Posterior vena cava (tissue), 2 donors: ENCODE measurements at regions of chr9 and their contacts with region 1.

Region 1: DNA sequence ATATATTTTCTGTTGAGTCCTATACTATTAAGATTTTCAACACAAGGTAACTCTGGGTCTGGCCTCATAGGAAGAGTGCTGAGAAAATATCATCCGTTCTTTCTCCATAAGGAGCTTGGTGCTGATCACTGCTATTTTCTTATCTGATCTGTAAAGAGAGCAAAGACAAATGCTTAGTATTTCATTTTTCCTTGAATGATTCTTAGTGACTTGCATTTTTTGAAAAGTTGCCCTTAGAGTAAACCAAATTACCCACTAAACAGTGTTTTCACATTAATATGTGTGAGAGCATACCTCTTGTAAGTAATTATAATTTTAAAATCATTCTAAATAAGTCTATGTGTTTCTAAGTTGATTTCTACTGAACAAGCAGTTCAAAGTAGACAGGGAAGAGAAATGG is 121.3 kb upstream of the CTSV start:
- DNase-seq: no peak

Region 2: DNA sequence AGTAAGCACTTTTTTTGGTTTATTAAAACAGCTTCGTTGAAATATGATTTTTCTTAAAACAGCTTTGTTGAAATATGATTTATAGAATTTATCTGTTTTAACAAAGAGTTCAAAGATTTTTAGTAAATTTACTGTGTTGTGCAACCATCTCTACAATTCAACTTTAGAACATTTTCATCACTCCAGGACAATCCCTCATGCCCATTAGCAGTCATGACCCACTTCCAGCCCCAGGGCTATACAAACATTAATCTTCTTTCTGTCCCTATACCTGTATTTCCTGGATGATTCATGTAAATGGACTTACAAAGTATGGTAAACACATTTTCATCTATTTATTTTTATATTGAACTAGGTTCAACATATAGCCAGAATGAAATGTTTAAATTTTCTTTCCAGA is 19.3 kb after region 1 on chr9:
- intact Hi-C with region 1: loop called in 1 of 2 experiments (anchors 2 kb)
- DNase-seq: no peak